ENCODE measurements at regions of chr13 and their contacts with region 1.

Region 1: GRCh38 chr13:99200432-99201167 is at the start of gene UBAC2:
- DNase-seq: peak; percentile 97 to 98
- ATAC-seq: peak; percentile 92 to 97 (median 94)
- H3K4me3 ChIP-seq: peak within 1 kb of the TSS; percentile 87
- H3K27ac ChIP-seq: peak within 1 kb of the TSS; percentile 94
- H3K4me1 ChIP-seq: peaks cover 26% of the 10 kb centered on the region
- H3K27me3 ChIP-seq: no peaks in the 10 kb centered on the region
- CTCF ChIP-seq: no peak
- total RNA-seq, gene UBAC2: 65.1 to 79.2 (median 71.0) TPM

Region 2: GRCh38 chr13:99093997-99094396 is 106.6 kb before region 1 on chr13:
- intact Hi-C with region 1: loop called in 1 of 2 experiments (anchors 5 kb)
- DNase-seq: no peak
- ATAC-seq: no peak
- H3K4me3 ChIP-seq: no peak overlapping the region
- H3K27ac ChIP-seq: no peak overlapping the region
- H3K4me1 ChIP-seq: no peaks in the 10 kb centered on the region
- H3K27me3 ChIP-seq: no peaks in the 10 kb centered on the region
- CTCF ChIP-seq: no peak

Region 3: GRCh38 chr13:99154064-99154463 is 46.5 kb before region 1 on chr13:
- intact Hi-C with region 1: no loop called
- DNase-seq: no peak
- ATAC-seq: no peak
- H3K4me3 ChIP-seq: no peak overlapping the region
- H3K27ac ChIP-seq: no peak overlapping the region
- H3K4me1 ChIP-seq: no peaks in the 10 kb centered on the region
- H3K27me3 ChIP-seq: peaks cover 0 to 12% (median 0%) of the 10 kb centered on the region in 3 donors
- CTCF ChIP-seq: no peak

Region 4: DNA sequence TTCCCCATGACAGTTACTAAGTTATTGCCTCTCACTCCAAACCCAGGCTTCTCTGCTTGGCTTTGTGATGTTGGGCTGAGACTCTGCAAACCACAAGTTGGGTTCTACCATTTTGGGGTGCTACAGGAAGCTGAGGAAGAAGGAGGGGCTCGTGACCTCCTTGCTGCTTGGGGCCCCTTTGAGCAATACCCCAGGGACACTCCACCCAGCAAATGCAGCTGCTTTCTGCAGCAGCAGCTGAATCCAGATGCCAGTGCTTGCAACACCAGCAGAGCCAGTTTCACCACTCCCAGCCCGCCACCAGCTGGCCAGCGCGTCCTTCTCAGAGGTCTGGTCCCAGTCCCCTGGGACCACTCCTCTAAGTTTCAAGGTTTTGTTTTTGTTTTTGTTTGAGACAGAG is 22.0 kb before region 1 on chr13:
- intact Hi-C with region 1: loop called in 1 of 2 experiments (anchors 1 kb)
- DNase-seq: peak in 1 of 2 donors; percentile 74
- ATAC-seq: no peak
- H3K4me3 ChIP-seq: no peak overlapping the region
- H3K27ac ChIP-seq: no peak overlapping the region
- H3K4me1 ChIP-seq: no peaks in the 10 kb centered on the region
- H3K27me3 ChIP-seq: peaks cover 0 to 3% (median 0%) of the 10 kb centered on the region in 3 donors
- CTCF ChIP-seq: no peak

Region 5: GRCh38 chr13:99218969-99219368 is 18.4 kb after region 1 on chr13:
- intact Hi-C with region 1: loop called in 1 of 2 experiments (anchors 2 kb)
- DNase-seq: no peak
- ATAC-seq: no peak
- H3K4me3 ChIP-seq: peak overlapping the region; percentile 29
- H3K27ac ChIP-seq: peak overlapping the region; percentile 77
- H3K4me1 ChIP-seq: peaks cover 75% of the 10 kb centered on the region
- H3K27me3 ChIP-seq: no peaks in the 10 kb centered on the region
- CTCF ChIP-seq: no peak

Region 6: DNA sequence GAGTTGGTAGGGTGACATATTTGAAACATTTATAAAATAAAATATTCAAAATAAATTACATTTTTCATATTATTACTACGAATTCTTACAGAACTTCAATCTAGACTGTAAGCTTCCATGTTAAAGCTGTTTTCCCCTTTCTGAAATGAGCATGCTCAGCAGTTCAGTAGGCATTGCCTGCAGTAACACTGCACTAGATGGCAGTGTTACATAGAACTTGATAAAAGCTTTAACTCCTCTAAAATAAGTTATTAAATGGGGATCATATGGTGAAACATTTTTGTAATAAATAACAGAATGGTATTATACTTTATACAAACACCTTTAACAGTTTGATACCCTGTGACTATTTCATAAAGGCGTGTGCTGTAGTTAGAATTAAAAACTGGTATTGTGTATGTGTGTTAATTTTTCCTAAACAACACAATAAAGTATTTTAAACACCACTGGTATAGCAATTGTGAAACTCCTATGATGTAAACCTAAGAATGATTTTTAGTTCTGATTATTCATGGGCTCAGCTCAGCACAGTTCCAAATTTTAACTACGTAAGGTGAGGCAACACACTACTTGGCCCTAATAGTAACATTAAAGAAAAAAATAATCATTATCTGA is 69.1 kb after region 1 on chr13:
- intact Hi-C with region 1: loop called in 1 of 2 experiments (anchors 2 kb)
- DNase-seq: no peak
- ATAC-seq: peak; percentile 60 to 84 (median 73)
- H3K4me3 ChIP-seq: no peak overlapping the region
- H3K27ac ChIP-seq: no peak overlapping the region
- H3K4me1 ChIP-seq: peaks cover 11% of the 10 kb centered on the region
- H3K27me3 ChIP-seq: no peaks in the 10 kb centered on the region
- CTCF ChIP-seq: peak; percentile 66

Region 7: DNA sequence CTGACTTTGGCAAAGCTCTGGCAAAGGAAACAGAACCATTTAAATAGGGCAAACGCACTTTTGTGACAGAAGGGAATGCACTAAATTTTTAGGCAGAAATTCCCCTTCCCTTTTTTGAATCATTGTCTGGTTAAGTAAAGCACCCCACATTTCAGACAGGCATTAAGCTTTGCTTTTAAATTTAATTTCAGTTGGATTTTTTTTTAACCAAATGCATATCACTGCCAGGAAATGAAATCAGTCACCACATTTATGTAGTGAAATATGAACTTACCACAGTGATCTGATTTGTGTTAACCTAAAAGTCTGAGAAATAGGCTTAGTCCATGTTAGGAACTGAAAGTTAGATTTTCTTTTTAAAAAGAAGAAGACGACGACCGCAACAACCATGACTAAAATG is 95.8 kb after region 1 on chr13:
- intact Hi-C with region 1: no loop called
- DNase-seq: no peak
- ATAC-seq: no peak
- H3K4me3 ChIP-seq: no peak overlapping the region
- H3K27ac ChIP-seq: no peak overlapping the region
- H3K4me1 ChIP-seq: no peaks in the 10 kb centered on the region
- H3K27me3 ChIP-seq: no peaks in the 10 kb centered on the region
- CTCF ChIP-seq: no peak

Region 8: DNA sequence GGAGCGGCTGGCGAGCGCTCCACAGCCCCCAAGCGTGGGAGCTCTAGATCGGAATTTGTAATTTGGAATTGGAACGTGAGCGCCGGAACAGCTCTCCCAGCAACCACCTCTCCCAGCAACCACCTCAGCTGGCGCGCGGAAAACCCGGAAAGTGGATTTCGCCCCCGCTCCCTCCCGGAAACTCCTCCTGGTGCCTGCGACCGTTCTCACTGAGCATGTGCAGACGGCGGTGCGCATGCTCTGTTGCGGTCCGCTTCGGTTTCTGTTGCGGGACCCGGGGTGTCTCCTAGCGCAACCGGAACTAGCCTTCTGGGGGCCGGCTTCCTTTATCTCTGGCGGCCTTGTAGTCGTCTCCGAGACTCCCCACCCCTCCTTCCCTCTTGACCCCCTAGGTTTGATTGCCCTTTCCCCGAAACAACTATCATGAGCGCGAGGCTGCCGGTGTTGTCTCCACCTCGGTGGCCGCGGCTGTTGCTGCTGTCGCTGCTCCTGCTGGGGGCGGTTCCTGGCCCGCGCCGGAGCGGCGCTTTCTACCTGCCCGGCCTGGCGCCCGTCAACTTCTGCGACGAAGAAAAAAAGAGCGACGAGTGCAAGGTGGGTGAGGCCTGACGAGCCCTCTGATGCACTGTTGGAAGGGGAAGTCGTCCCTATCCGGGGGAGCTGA is 300.7 kb after region 1 on chr13 and contains the start of gene TM9SF2:
- intact Hi-C with region 1: loop called in 1 of 2 experiments (anchors 10 kb)
- DNase-seq: peak; percentile 98 to 99
- ATAC-seq: peak; percentile 82 to 88 (median 86)
- H3K4me3 ChIP-seq: peak within 1 kb of the TSS; percentile 82
- H3K27ac ChIP-seq: peak within 1 kb of the TSS; percentile 90
- H3K4me1 ChIP-seq: peaks cover 65% of the 10 kb centered on the region
- H3K27me3 ChIP-seq: no peaks in the 10 kb centered on the region
- CTCF ChIP-seq: no peak
- total RNA-seq, gene TM9SF2: 30.6 to 45.2 (median 42.7) TPM